Activated CD4-positive, alpha-beta memory T cell treated with anti-CD3 and anti-CD28 coated beads for 36 hours (primary cell): ENCODE measurements at regions of chr4 and their contacts with region 1.

Region 1: GRCh38 chr4:169659716-169660670 is 39.6 kb downstream of the CLCN3 start:
- DNase-seq: peak; percentile 80
- H3K4me3 Mint-ChIP-seq: peak overlapping the region; percentile 68
- H3K27ac Mint-ChIP-seq: peak overlapping the region; percentile 91
- H3K4me1 Mint-ChIP-seq: peaks cover 22% of the 10 kb centered on the region
- H3K27me3 Mint-ChIP-seq: no peaks in the 10 kb centered on the region

Region 2: GRCh38 chr4:168882630-168883233 is 777.3 kb before region 1 on chr4:
- CTCF ChIA-PET with region 1: no interaction called
- POLR2A ChIA-PET with region 1: no interaction called
- intact Hi-C with region 1: no loop called
- DNase-seq: no peak
- H3K4me3 Mint-ChIP-seq: no peak overlapping the region
- H3K27ac Mint-ChIP-seq: no peak overlapping the region
- H3K4me1 Mint-ChIP-seq: peaks cover 8% of the 10 kb centered on the region
- H3K27me3 Mint-ChIP-seq: peaks cover 32% of the 10 kb centered on the region

Region 3: GRCh38 chr4:169619959-169620879 is 39.8 kb before region 1 on chr4 and contains the start of gene CLCN3:
- CTCF ChIA-PET with region 1: interaction called, 18 read pairs
- POLR2A ChIA-PET with region 1: interaction called, 9 read pairs
- intact Hi-C with region 1: loop called (anchors 1 kb)
- DNase-seq: peak; percentile 94
- H3K4me3 Mint-ChIP-seq: peak within 1 kb of the TSS; percentile 96
- H3K27ac Mint-ChIP-seq: peak within 1 kb of the TSS; percentile 98
- H3K4me1 Mint-ChIP-seq: peaks cover 60% of the 10 kb centered on the region
- H3K27me3 Mint-ChIP-seq: no peaks in the 10 kb centered on the region
- total RNA-seq, gene CLCN3: 17.3 to 18.6 TPM

Region 4: GRCh38 chr4:169627307-169627706 is 32.7 kb before region 1 on chr4:
- CTCF ChIA-PET with region 1: interaction called, 6 read pairs
- POLR2A ChIA-PET with region 1: interaction called, 3 read pairs
- intact Hi-C with region 1: loop called (anchors 1 kb)
- DNase-seq: no peak
- H3K4me3 Mint-ChIP-seq: no peak overlapping the region
- H3K27ac Mint-ChIP-seq: peak overlapping the region; percentile 33
- H3K4me1 Mint-ChIP-seq: peaks cover 51% of the 10 kb centered on the region
- H3K27me3 Mint-ChIP-seq: no peaks in the 10 kb centered on the region

Region 5: GRCh38 chr4:169690787-169691186 is 30.8 kb after region 1 on chr4:
- CTCF ChIA-PET with region 1: no interaction called
- POLR2A ChIA-PET with region 1: no interaction called
- intact Hi-C with region 1: no loop called
- DNase-seq: no peak
- H3K4me3 Mint-ChIP-seq: no peak overlapping the region
- H3K27ac Mint-ChIP-seq: no peak overlapping the region
- H3K4me1 Mint-ChIP-seq: peaks cover 6% of the 10 kb centered on the region
- H3K27me3 Mint-ChIP-seq: no peaks in the 10 kb centered on the region

Region 6: GRCh38 chr4:169716677-169717076 is 56.7 kb after region 1 on chr4:
- CTCF ChIA-PET with region 1: no interaction called
- POLR2A ChIA-PET with region 1: no interaction called
- intact Hi-C with region 1: loop called (anchors 10 kb)
- DNase-seq: no peak
- H3K4me3 Mint-ChIP-seq: no peak overlapping the region
- H3K27ac Mint-ChIP-seq: no peak overlapping the region
- H3K4me1 Mint-ChIP-seq: peaks cover 14% of the 10 kb centered on the region
- H3K27me3 Mint-ChIP-seq: no peaks in the 10 kb centered on the region

Region 7: DNA sequence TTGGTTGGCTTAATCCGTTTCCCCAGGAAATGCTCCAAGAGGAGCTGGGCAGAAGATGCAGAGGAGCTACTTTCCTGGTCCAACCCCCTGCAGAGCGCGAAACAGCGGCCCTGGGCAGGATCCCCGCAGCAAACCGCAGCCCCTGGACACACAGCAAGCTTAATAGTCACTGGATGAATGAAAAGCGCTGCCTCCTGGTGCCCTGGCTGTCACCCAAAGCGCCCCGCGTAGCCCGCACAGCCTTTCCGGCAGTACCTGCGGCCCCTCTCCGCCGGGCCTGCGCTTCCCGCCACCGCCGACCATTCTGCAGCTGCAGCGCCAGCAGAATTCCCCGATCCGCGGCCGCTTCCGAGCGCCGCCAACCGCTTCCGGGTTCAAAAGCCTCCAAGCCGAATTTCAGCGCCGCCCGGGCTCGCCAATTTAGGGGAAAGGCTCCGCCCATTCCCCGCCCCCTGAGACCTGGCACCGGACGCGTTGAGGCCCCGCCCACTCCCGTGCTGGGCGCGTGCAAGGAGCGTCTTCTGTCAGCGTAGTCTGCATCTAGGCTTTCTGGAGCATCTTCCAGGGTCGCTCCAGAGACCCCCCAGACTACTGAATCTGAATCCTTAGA is 97.7 kb after region 1 on chr4 and contains the start of gene HPF1:
- CTCF ChIA-PET with region 1: no interaction called
- POLR2A ChIA-PET with region 1: no interaction called
- intact Hi-C with region 1: loop called (anchors 1 kb)
- DNase-seq: peak; percentile 97
- H3K4me3 Mint-ChIP-seq: peak within 1 kb of the TSS; percentile 83
- H3K27ac Mint-ChIP-seq: peak within 1 kb of the TSS; percentile 70
- H3K4me1 Mint-ChIP-seq: peaks cover 24% of the 10 kb centered on the region
- H3K27me3 Mint-ChIP-seq: no peaks in the 10 kb centered on the region
- total RNA-seq, gene HPF1: 36.6 to 41.1 TPM